ENCODE measurements at regions of chr10 and their contacts with region 1.

Region 1: GRCh38 chr10:35244549-35244948 is 91.8 kb upstream of the CCNY start:
- DNase-seq: no peak
- H3K4me3 Mint-ChIP-seq: no peak overlapping the region
- H3K27ac Mint-ChIP-seq: no peak overlapping the region
- H3K4me1 Mint-ChIP-seq: no peaks in the 10 kb centered on the region
- H3K27me3 Mint-ChIP-seq: no peaks in the 10 kb centered on the region

Region 2: DNA sequence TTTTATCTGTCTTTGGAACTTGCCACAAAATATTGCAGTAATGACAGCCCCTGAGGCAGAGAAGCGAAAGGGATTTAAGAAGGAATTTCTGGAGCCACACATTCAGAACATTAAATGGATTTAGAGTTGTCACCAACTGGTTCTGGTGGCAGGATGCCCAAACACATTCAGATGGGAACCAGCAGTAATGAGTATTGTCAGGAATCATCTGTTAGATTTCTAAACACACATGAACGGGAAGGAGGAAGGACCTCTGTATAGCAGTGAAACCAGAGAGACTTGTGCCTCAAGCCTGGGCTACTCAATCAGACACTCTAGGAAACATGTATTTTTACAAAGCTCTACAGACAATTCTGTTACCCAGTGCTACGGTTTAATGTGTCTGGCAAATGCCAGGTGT is 12.0 kb before region 1 on chr10:
- CTCF ChIA-PET with region 1: no interaction called
- intact Hi-C with region 1: no loop called
- DNase-seq: no peak
- H3K4me3 Mint-ChIP-seq: no peak overlapping the region
- H3K27ac Mint-ChIP-seq: no peak overlapping the region
- H3K4me1 Mint-ChIP-seq: no peaks in the 10 kb centered on the region
- H3K27me3 Mint-ChIP-seq: no peaks in the 10 kb centered on the region

Region 3: GRCh38 chr10:35642027-35642792 is 397.7 kb after region 1 on chr10 and contains the start of gene FZD8:
- CTCF ChIA-PET with region 1: interaction called, 3 read pairs
- intact Hi-C with region 1: loop called (anchors 5 kb)
- DNase-seq: peak; percentile 75
- H3K4me3 Mint-ChIP-seq: peak within 1 kb of the TSS; percentile 78
- H3K27ac Mint-ChIP-seq: no peak within 1 kb of the TSS
- H3K4me1 Mint-ChIP-seq: peaks cover 19% of the 10 kb centered on the region
- H3K27me3 Mint-ChIP-seq: peaks cover 41% of the 10 kb centered on the region
- total RNA-seq, gene FZD8: 0.15 to 0.19 TPM

Measured in activated naive CD4-positive, alpha-beta T cell treated with anti-CD3 and anti-CD28 coated beads for 36 hours (primary cell).